AG04450 (cell line): ENCODE measurements at regions of chr10 and their contacts with region 1.

Region 1: GRCh38 chr10:113267619-113268562 is 285.0 kb upstream of the HABP2 start:
- DNase-seq: no peak
- H3K4me3 ChIP-seq: no peak overlapping the region
- H3K27ac ChIP-seq: no peak overlapping the region
- H3K27me3 ChIP-seq: no peaks in the 10 kb centered on the region
- CTCF ChIP-seq: no peak

Region 2: GRCh38 chr10:113252650-113253618 is 15.0 kb before region 1 on chr10:
- CTCF ChIA-PET with region 1: interaction called, 13 read pairs
- POLR2A ChIA-PET with region 1: no interaction called
- DNase-seq: no peak
- H3K4me3 ChIP-seq: no peak overlapping the region
- H3K27ac ChIP-seq: no peak overlapping the region
- H3K27me3 ChIP-seq: peaks cover 9% of the 10 kb centered on the region
- CTCF ChIP-seq: no peak

Region 3: DNA sequence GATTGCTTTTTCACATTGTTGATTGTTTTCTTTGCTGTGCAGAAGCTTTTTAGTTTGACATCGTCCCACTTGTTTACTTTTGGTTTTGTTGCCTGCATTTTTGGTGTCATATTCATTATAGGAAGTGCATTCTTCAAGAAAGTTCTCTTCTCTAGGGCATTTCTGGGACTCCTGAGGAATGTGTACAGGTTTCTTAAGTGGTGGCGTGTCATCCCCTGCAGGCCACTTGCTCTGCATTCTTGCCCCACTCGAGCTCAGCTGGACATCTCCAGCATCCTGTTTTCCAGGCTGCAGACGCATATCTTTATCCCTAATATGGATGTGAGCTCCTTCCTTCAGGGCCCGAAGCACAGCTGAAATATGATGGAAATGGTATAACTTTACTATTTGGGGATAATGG is 29.3 kb after region 1 on chr10:
- CTCF ChIA-PET with region 1: no interaction called
- POLR2A ChIA-PET with region 1: no interaction called
- DNase-seq: no peak
- H3K4me3 ChIP-seq: no peak overlapping the region
- H3K27ac ChIP-seq: no peak overlapping the region
- H3K27me3 ChIP-seq: peaks cover 2% of the 10 kb centered on the region
- CTCF ChIP-seq: no peak